Adrenal gland (tissue), 19 donors: ENCODE measurements at regions of chr5 and their contacts with region 1.

Region 1: GRCh38 chr5:180784497-180785097 is 18.0 kb downstream of the MGAT1 start:
- DNase-seq: peak; percentile 84 to 94 (median 90)
- H3K4me3 ChIP-seq: peak overlapping the region in 1 of 4 donors; percentile 10
- H3K27ac ChIP-seq: peak overlapping the region in 2 of 5 donors; percentile 86 to 93
- H3K4me1 ChIP-seq: peaks cover 27 to 33% of the 10 kb centered on the region in 2 donors
- H3K27me3 ChIP-seq: no peaks in the 10 kb centered on the region
- CTCF ChIP-seq: peak; percentile 22 to 80 (median 68)
- POLR2A ChIP-seq: no peak

Region 2: GRCh38 chr5:180860887-180861822 is 76.6 kb after region 1 on chr5 and contains the start of gene ZFP62:
- intact Hi-C with region 1: loop called (anchors 5 to 10 kb)
- DNase-seq: peak; percentile 87 to 92 (median 89)
- H3K4me3 ChIP-seq: peak within 1 kb of the TSS; percentile 72 to 99 (median 75)
- H3K27ac ChIP-seq: peak within 1 kb of the TSS; percentile 46 to 90 (median 82)
- H3K4me1 ChIP-seq: peaks cover 0 to 8% of the 10 kb centered on the region in 2 donors
- H3K27me3 ChIP-seq: no peaks in the 10 kb centered on the region
- CTCF ChIP-seq: peak in 1 of 6 experiments; percentile 26
- POLR2A ChIP-seq: peak; percentile 61 to 67
- total RNA-seq, gene ZFP62: 8.5 to 34.5 (median 14.8) TPM

Region 3: DNA sequence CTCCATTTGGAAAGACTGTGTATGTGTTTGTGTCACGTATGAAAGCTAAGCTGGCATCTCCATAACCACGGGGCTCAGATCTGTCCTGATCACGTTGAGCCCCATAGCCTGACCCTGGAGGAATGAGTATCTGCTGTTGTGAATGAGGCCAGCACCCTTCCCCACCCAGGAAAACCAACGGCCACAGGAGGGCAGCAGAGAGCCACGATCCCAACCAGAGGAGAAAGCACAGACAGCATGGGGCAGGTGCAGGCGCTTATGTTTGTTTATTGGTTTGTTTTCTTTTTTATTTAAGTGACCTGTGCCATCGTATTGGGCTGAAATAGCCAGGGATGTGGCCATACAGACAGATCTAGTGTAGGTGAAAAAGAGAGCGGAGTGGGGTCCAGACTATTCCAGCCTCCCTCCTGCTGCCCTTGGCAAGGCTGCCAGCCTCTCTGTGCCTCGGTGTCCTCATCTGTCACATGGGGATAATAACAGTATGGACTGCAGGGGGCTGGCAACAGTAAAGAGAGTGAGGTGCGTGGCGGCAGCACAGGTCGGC is 374.8 kb after region 1 on chr5:
- intact Hi-C with region 1: loop called in 1 of 2 experiments (anchors 10 kb)
- DNase-seq: peak; percentile 81 to 94 (median 85)
- H3K4me3 ChIP-seq: no peak overlapping the region
- H3K27ac ChIP-seq: no peak overlapping the region
- H3K4me1 ChIP-seq: no peaks in the 10 kb centered on the region
- H3K27me3 ChIP-seq: peaks cover 1% of the 10 kb centered on the region
- CTCF ChIP-seq: peak; percentile 83 to 90 (median 86)
- POLR2A ChIP-seq: no peak

Region 4: GRCh38 chr5:181173420-181174342 is 389.1 kb after region 1 on chr5:
- intact Hi-C with region 1: loop called in 1 of 2 experiments (anchors 5 kb)
- DNase-seq: no peak
- H3K4me3 ChIP-seq: no peak overlapping the region
- H3K27ac ChIP-seq: no peak overlapping the region
- H3K4me1 ChIP-seq: no peaks in the 10 kb centered on the region
- H3K27me3 ChIP-seq: peaks cover 69% of the 10 kb centered on the region
- CTCF ChIP-seq: no peak
- POLR2A ChIP-seq: no peak